Cardiac septum (tissue), 1 donor: ENCODE measurements at regions of chr2 and their contacts with region 1.

Region 1: DNA sequence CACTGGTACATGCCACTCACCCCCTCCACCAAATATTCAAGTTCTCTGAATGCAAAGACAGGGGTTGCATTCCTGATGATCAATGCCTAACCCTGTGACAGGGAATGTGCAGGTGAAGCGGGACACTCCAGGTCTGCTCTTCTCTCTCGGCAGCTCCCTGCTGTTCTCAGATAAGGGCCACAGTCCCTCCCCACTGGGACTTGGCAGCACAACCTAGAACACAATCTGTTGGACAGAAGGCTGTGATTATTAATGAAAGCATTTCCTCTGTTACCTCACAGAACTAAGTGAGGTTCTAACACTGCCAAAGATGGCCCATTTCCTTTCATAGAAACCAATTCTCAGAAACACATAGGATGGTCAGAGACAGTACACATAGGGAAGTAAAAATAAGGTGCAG is 42.7 kb downstream of the VSNL1 start:
- DNase-seq: no peak

Region 2: DNA sequence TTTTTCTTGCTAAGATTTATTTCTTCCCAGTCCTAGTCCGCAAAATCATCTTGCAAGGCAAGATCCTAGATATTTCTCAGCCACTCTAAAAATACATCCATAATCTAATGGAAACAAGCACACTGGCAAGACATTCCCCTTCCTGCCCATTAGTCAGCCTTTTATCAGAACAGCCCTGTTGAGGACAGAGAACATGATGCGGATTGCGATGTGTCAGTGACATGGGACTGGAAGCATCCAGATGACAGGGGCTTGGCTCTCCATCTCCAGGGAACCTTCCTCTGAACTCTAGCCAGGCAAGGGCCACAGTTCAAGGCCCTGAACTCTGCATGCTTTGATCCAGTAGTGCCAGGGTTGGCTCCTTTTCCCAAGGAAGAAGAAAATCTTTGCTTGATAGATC is 27.4 kb after region 1 on chr2:
- intact Hi-C with region 1: loop called (anchors 2 kb)
- DNase-seq: no peak